Calu3 (cell line): ENCODE measurements at regions of chr17 and their contacts with region 1.

Region 1: DNA sequence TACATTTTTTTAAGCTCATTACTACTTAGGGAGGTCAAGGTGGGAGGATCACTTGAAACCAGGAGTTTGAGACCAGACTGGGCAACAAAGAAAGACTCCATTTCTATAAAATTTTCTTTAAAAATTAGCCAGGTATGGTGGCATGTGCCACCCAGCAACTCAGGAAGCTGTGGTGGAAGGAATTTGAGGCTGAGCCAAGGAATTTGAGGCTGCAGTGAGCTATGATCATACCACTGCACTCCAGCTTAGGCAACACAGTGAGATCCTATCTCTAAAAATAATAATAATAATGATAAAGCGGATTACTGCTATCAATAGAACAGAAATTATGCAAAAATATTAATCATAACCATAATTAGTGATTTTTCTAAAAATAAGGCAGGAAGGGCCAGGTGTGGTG is 170.3 kb downstream of the COPRS start:
- DNase-seq: no peak
- H3K4me3 Mint-ChIP-seq: no peak overlapping the region
- H3K27ac Mint-ChIP-seq: no peak overlapping the region
- H3K4me1 Mint-ChIP-seq: no peaks in the 10 kb centered on the region
- H3K27me3 Mint-ChIP-seq: peaks cover 7% of the 10 kb centered on the region
- CTCF ChIP-seq: no peak

Region 2: GRCh38 chr17:31114956-31115555 is 573.6 kb before region 1 on chr17:
- CTCF ChIA-PET with region 1: no interaction called
- intact Hi-C with region 1: no loop called
- DNase-seq: no peak
- H3K4me3 Mint-ChIP-seq: no peak overlapping the region
- H3K27ac Mint-ChIP-seq: no peak overlapping the region
- H3K4me1 Mint-ChIP-seq: peaks cover 13% of the 10 kb centered on the region
- H3K27me3 Mint-ChIP-seq: no peaks in the 10 kb centered on the region
- CTCF ChIP-seq: no peak

Region 3: GRCh38 chr17:31819578-31819977 is 130.9 kb after region 1 on chr17:
- CTCF ChIA-PET with region 1: interaction called, 16 read pairs
- intact Hi-C with region 1: no loop called
- DNase-seq: no peak
- H3K4me3 Mint-ChIP-seq: no peak overlapping the region
- H3K27ac Mint-ChIP-seq: no peak overlapping the region
- H3K4me1 Mint-ChIP-seq: no peaks in the 10 kb centered on the region
- H3K27me3 Mint-ChIP-seq: no peaks in the 10 kb centered on the region
- CTCF ChIP-seq: no peak